PC-9 (cell line): ENCODE measurements at regions of chr1 and their contacts with region 1.

Region 1: DNA sequence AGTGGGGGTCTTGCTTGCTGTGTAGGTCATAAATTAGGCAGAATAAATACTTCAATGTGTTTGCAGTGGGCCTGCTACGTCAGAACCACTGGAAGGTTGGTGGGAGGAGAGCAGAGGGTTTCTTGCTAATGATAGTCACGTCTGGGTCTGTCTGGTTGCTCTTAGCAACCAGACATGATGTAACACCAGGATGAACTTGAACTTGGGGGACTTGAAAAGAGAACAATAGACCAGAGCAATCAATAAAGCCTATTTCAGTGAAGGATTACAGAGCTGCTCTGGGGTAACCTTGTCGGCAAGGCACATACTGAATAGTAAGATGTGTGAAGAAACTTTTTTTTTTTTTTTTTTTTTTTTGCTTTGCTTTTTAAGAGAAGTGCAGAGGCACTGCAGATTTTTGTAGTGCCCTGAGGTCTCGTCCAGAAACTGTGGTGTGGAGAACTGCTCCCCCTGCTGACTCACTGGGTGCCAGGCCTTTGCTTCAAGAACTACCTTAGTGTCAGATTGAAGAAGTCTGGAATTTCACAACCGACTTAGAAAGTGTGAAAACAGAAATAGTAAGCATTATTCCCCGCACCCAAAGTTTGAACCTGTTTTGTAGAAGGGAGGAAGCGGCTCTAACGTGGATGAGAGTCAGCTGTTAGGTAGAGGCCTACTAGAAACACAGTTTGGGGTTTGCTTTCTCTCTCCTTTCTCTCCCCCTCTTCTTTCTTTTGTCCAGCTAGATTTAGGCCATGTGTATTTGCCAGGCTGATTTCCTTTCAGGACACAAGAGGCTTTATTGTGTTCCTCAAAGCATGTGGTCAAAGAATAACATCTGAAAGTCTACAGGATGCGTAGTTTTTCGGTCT is 271.6 kb downstream of the TM2D1 start:
- DNase-seq: peak; percentile 82 to 87
- H3K4me3 ChIP-seq: no peak overlapping the region
- H3K27ac ChIP-seq: peak overlapping the region; percentile 17; the same call in 1 of the 2 replicates
- H3K4me1 ChIP-seq: peaks cover 22% of the 10 kb centered on the region
- H3K27me3 ChIP-seq: no peaks in the 10 kb centered on the region
- CTCF ChIP-seq: peak; percentile 79

Region 2: GRCh38 chr1:60281360-60281932 is 1171.9 kb before region 1 on chr1:
- CTCF ChIA-PET with region 1: no interaction called
- POLR2A ChIA-PET with region 1: no interaction called
- intact Hi-C with region 1: loop called (anchors 2 kb)
- DNase-seq: peak; percentile 54 to 59
- H3K4me3 ChIP-seq: no peak overlapping the region
- H3K27ac ChIP-seq: no peak overlapping the region
- H3K4me1 ChIP-seq: peaks cover 25% of the 10 kb centered on the region
- H3K27me3 ChIP-seq: no peaks in the 10 kb centered on the region
- CTCF ChIP-seq: peak; percentile 93

Region 3: DNA sequence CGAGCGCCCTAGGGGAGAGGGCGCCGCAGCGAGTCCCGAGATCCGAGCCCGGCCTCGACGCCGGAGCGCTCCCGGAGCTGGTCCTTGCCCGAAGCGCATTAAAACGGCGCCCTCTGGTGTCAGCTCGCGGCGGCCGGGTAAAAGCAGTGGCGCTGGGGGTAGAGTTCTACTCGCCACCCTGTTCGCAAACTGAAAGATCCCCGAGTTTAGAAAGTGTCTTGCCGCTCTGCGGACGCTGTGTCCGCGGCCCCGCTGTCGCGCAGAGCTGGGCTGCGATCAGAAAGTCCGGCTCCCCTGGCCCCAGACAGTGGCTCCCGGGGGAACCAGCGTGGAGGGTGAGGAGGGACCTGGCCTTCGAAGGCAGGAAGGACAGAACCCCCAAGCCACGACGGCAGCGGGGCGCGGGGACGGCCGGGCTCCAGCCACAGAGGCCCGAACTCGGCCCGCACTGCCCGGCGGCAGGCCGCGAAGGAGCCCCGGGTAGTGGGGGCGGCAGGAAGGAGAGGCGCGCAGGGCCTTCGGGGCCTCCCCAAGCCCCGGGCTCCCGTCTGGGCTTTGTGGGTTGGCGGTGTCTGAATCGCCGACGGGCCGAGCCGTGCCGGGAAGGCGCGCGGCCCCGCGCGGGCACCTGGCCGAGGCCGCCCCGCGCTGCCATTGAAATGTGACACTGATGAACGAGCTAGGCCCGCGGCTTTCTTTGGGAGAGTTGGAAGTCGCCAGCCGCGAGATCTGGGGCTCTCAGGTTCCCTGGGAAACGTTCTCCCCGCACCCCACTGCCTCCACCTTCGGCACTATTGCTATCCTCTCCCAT is 410.1 kb before region 1 on chr1:
- CTCF ChIA-PET with region 1: no interaction called
- POLR2A ChIA-PET with region 1: no interaction called
- intact Hi-C with region 1: loop called (anchors 2 kb)
- DNase-seq: peak; percentile 40 to 90
- H3K4me3 ChIP-seq: peak overlapping the region; percentile 59
- H3K27ac ChIP-seq: no peak overlapping the region
- H3K4me1 ChIP-seq: no peaks in the 10 kb centered on the region
- H3K27me3 ChIP-seq: no peaks in the 10 kb centered on the region
- CTCF ChIP-seq: peak; percentile 81

Region 4: DNA sequence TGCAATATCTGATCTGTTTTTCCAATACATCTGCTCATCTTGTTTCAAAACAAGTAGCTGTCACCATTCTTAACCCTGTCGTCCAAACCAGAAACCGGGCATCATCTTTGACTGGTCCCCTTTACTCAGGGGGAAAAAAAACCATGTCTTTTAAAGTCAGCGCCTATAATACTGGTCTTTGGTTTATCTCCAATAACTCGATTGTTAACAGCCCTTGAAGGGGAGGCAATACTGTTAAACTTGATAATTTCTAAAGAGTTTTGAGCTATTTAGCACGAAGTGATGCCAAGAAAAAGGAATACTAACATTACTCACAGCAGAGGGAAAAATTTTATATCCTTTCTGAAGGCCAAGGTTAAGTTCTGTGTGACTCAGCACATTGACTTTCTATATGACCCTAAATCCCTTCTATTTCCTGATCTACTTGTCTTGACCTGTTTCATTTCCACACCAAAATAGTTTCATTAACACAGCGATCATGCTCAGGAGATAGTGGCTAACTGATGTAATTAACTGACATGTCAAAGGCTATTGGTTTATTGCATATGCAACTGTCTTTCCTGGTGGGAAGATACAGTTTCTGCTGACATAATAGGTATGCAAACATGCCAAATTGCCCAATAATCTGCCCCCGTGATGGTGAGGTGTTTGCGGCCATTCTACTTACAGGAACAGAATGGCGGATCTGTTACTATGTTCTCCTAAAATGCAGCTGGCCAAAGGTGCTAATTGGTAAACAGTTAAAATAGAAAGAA is 311.9 kb before region 1 on chr1:
- CTCF ChIA-PET with region 1: no interaction called
- POLR2A ChIA-PET with region 1: no interaction called
- intact Hi-C with region 1: loop called (anchors 10 kb)
- DNase-seq: peak; percentile 35 to 93
- H3K4me3 ChIP-seq: peak overlapping the region; percentile 16; the same call in 1 of the 2 replicates
- H3K27ac ChIP-seq: peak overlapping the region; percentile 89
- H3K4me1 ChIP-seq: peaks cover 59% of the 10 kb centered on the region
- H3K27me3 ChIP-seq: no peaks in the 10 kb centered on the region
- CTCF ChIP-seq: no peak

Region 5: DNA sequence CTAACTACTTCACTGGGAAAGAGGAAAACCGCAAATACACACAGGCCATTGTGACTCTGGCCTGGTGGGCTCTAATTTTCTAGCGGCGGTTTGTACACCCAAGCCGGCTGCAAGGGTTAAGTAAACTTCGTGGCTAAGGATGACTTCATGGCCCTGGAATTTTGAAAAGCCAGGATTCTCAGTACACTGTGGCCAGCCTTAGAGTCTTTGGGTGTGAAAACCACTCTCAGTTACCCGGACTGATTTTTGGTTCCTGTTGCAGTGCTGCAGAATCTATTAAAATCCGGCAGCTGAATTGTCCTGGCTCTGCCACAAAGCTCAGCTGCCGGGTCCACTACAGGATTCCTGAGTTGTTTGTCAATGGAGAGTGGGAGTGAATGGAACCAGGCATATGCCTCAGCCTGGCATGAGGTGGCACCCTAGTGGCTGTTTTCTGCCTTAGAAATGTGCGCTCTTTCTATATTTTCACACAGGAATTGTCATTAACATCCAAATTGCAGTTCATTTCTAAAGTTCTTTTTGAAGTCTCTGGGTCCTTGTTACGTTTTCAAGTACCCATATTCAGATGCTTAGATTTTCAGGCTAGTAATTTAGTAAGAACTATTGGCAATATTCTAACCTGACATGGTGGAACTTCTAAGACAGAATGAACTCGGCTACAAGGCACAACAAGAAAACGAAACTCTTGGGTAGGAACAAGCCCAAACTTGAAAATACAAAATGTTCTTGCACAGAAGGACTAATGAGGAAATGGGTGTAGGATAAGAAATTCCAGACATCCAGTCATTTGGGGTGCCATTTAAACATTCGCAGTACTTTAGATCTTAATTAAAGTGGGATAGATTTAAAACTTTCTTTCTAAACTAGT is 115.1 kb before region 1 on chr1:
- CTCF ChIA-PET with region 1: interaction called, 3 read pairs
- POLR2A ChIA-PET with region 1: no interaction called
- intact Hi-C with region 1: loop called (anchors 1 kb)
- DNase-seq: peak; percentile 79 to 92
- H3K4me3 ChIP-seq: peak overlapping the region; percentile 12; the same call in 1 of the 2 replicates
- H3K27ac ChIP-seq: peak overlapping the region; percentile 69
- H3K4me1 ChIP-seq: peaks cover 31% of the 10 kb centered on the region
- H3K27me3 ChIP-seq: no peaks in the 10 kb centered on the region
- CTCF ChIP-seq: peak; percentile 77

Region 6: GRCh38 chr1:61481313-61481712 is 28.0 kb after region 1 on chr1:
- CTCF ChIA-PET with region 1: no interaction called
- POLR2A ChIA-PET with region 1: no interaction called
- intact Hi-C with region 1: no loop called
- DNase-seq: peak; percentile 65 to 99
- H3K4me3 ChIP-seq: no peak overlapping the region
- H3K27ac ChIP-seq: peak overlapping the region; percentile 96
- H3K4me1 ChIP-seq: peaks cover 42% of the 10 kb centered on the region
- H3K27me3 ChIP-seq: no peaks in the 10 kb centered on the region
- CTCF ChIP-seq: no peak

Region 7: GRCh38 chr1:61851849-61852669 is 398.7 kb after region 1 on chr1:
- CTCF ChIA-PET with region 1: no interaction called
- POLR2A ChIA-PET with region 1: no interaction called
- intact Hi-C with region 1: loop called (anchors 10 kb)
- DNase-seq: peak in 1 of 2 experiments; percentile 37
- H3K4me3 ChIP-seq: no peak overlapping the region
- H3K27ac ChIP-seq: no peak overlapping the region
- H3K4me1 ChIP-seq: no peaks in the 10 kb centered on the region
- H3K27me3 ChIP-seq: no peaks in the 10 kb centered on the region
- CTCF ChIP-seq: peak; percentile 78